Lower leg skin (tissue), 4 donors: ENCODE measurements at regions of chr17 and their contacts with region 1.

Region 1: GRCh38 chr17:56939901-56940343 is 20.9 kb downstream of the COIL start:
- DNase-seq: no peak
- H3K4me3 ChIP-seq: no peak overlapping the region
- CTCF ChIP-seq: peak in 1 of 3 donors; percentile 65
- POLR2A ChIP-seq: no peak

Region 2: GRCh38 chr17:56809106-56809505 is 130.8 kb before region 1 on chr17:
- intact Hi-C with region 1: no loop called
- DNase-seq: no peak
- H3K4me3 ChIP-seq: no peak overlapping the region
- CTCF ChIP-seq: no peak
- POLR2A ChIP-seq: no peak

Region 3: DNA sequence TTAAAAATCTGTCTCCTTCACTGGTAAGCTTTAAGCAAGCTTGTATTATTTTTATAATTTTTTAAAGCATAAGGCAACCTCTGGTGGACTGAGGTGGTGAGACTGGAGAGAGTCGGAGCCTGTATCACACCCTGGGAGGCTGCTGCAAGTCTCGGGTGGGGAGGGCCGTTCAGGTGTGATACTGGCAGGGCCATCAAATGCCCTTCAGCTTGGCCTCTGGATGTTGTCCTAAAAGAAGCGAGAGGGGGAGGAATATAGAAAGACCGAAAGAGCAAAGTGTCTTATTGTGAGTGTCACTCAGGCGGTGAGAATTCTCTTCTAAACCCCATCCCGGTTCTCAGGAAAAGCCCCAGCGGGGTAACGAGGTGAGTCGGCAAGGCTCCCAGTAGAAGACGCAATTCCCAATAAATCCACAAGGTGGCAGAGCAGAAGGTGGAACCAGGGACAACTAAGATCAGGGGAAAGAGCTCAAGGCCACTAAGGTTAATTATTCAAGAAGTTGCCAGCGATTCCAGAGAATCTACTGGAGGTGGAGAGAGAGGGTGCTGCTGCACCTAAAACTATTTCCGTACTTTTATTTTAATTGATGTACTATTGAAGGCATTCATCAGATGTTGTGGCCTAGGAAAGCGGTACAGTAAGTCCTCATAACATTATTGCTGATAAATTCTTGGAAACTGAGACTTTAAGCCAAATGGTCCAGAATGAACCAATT is 120.3 kb before region 1 on chr17:
- intact Hi-C with region 1: loop called (anchors 5 kb)
- DNase-seq: peak in 1 of 2 donors; percentile 72
- H3K4me3 ChIP-seq: no peak overlapping the region
- CTCF ChIP-seq: peak in 1 of 3 donors; percentile 74
- POLR2A ChIP-seq: no peak

Region 4: GRCh38 chr17:56966338-56966737 is 26.4 kb after region 1 on chr17:
- intact Hi-C with region 1: no loop called
- DNase-seq: no peak
- H3K4me3 ChIP-seq: no peak overlapping the region
- CTCF ChIP-seq: no peak
- POLR2A ChIP-seq: no peak